Colonic mucosa (tissue), 4 donors: ENCODE measurements at regions of chr1 and their contacts with region 1.

Region 1: DNA sequence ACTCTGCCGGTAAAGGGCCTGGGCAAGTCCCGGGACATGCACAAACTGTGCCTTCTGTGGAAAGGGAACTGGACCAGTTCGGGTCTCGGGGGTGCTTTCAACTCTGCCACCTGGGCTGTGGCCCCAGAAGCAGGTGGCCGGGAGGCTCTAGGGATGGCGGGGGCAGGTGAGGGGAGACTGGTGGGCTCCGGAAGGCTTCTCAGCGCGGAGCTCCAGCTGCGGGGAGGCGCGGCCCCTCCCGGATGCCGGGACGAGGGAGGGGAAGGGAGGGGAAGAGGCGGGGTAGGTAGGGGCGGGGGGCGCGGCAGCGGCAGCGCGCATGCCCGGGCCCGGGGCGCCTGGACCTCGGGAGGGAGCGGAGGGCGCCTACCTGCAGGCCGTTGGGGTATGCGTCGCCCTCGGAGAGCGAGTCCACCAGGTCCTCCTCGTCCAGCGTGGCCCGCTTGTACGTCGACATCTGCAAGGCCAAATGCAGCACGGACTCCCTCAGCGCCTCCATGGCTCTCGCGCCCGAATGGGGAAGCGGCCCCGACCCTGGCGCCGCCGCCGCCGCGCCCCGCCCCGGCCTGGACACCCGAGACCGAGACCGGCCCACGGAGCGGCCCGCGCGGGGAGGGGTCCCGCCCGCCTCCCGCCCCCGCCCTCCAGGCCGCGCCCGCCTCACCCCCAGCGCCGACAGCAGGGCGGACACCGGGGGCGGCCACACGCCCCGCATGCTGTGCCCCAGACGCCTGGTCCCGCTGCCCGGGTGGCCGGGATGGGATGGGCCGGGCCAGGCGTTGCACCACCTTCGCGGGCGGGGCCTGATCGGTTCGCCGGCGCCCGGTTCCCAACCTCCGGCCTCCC is at the start of gene ECE1:
- DNase-seq: peak; percentile 64
- H3K4me3 ChIP-seq: peak within 1 kb of the TSS; percentile 55
- H3K27ac ChIP-seq: peak within 1 kb of the TSS; percentile 46
- H3K4me1 ChIP-seq: no peaks in the 10 kb centered on the region
- H3K27me3 ChIP-seq: no peaks in the 10 kb centered on the region
- CTCF ChIP-seq: no peak
- total RNA-seq, gene ECE1: 99.0 to 149 TPM

Region 2: DNA sequence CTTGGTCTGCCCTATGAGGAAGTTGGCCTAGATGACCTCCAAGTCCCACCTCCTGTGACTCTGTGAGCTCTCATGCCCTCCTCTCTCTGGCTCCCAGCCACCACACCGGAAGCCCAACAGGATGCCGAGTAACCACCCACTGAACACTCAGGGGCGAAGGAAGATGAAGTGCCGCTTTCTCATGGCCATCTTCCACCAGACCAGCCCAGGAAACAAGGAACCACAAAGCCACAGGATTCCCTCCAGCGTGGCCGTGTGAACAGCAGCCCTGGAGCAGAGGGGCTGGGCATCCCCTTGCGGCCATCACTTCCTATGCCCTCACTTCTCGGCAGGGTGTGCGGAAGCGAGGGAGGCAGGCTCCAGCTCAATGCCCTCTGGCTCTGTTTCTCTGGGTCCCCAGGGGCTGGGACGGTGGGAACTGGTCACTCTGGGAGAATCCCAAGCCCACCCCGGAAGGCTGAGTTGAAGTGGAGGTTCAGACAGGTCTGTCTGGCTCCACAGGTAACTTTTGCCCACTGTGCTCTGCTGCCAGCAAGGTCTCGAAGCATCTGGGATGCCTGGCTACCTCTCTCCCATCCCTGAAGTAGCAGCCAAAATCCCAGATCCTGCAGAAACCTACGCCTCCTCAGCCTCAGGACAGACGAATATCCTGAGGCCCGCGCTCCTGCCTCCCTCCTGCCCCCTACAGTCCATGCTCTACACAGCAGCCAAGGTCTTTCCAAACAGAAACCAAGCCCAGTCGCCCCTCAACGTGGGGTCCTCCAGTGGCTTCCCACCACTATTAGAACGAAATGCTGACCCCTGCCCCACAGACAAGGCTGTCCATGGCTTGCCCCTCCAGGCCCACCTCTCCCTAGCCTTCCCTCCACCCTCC is 44.5 kb after region 1 on chr1:
- intact Hi-C with region 1: loop called (anchors 5 kb)
- DNase-seq: peak; percentile 78
- H3K4me3 ChIP-seq: no peak overlapping the region
- H3K27ac ChIP-seq: peak overlapping the region; percentile 74
- H3K4me1 ChIP-seq: peaks cover 42% of the 10 kb centered on the region
- H3K27me3 ChIP-seq: no peaks in the 10 kb centered on the region
- CTCF ChIP-seq: peak; percentile 61